ENCODE measurements at regions of chr10 and their contacts with region 1.

Region 1: DNA sequence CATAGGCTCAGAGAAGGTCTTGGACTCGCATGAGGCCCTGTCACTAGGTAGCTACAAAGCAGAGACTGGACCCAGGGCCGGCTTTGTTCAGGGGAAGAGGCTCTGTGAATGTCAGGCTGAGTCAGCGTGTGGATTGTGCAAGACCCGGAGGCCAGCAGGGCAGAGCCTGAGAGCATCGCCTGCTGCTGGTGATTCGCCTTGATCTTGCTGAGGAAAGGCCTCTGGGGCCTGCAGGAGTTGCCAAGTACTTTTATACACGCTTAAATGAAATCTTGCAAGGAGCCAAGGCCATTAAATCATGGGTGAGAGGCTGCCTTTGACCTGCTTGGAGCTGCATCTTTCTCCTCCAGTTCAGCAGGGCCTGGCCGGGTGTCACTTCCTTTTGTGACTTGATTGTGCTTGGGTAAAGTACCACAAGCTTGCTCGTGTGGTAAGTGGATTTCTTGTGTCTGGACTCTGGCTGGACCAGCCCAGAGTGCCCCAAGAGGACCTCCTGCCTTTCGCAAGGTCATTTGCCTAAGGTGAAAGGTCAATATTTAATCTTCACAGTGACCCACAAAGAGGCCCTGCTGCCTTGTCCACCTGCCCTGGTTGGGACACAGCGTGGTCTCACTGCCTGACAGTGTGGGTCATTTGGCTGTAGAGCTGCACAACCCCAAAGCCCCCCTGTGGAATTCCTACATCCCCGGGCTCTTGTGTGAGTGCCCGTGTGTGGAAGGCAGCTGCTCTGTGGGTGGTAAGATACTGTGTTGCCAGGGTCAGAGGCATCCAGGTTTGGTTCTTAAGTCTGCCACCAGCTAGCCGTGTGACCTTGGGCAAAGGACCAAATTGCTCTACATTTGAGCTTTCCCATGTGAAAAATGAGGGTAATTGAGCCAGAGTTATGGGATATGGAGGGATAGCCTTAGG is 38.6 kb upstream of the SH2D4B start:
- DNase-seq: peak; percentile 45
- H3K4me3 Mint-ChIP-seq: peak overlapping the region; percentile 44
- H3K27ac Mint-ChIP-seq: peak overlapping the region; percentile 89
- H3K4me1 Mint-ChIP-seq: peaks cover 98% of the 10 kb centered on the region
- H3K27me3 Mint-ChIP-seq: no peaks in the 10 kb centered on the region

Region 2: DNA sequence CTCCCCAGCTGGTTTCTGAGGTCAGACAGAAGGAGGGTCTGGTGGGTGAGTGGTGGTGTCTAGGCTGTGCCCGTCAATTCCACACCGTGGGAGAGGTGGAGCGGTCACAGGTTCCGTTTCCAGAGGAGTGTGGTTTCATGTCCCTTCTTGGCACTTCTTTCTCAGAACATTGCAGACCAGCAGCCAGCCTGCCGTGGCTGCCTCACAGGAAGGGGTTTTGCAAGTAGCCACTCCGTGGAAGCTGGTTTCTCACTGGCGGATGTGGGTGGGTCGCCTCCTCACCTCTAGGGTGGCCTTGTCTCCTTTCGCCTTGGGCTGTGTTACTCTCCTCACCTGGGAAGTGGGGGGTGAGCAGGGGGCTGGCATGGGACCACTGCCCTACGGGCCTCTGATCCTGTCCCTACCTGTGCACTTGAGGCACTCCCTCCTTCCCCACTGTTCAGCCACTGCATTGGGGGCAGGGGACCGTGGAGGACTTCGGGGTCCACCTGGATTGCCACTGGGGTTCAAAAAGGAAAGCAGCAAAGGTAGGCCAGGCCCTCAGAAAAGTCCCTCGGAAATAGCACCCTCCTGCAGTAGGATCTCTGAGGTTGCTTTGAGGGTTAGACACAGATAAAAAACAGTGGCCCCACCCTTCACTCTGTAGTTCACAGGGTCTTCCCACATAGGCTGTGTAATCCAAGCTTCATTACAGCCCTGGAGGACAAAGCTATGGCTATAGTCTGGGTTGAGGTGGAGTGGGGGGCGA is 11.1 kb before region 1 on chr10:
- CTCF ChIA-PET with region 1: interaction called, 58 read pairs
- POLR2A ChIA-PET with region 1: no interaction called
- DNase-seq: peak; percentile 78
- H3K4me3 Mint-ChIP-seq: peak overlapping the region; percentile 64
- H3K27ac Mint-ChIP-seq: peak overlapping the region; percentile 89
- H3K4me1 Mint-ChIP-seq: peaks cover 99% of the 10 kb centered on the region
- H3K27me3 Mint-ChIP-seq: no peaks in the 10 kb centered on the region

Region 3: DNA sequence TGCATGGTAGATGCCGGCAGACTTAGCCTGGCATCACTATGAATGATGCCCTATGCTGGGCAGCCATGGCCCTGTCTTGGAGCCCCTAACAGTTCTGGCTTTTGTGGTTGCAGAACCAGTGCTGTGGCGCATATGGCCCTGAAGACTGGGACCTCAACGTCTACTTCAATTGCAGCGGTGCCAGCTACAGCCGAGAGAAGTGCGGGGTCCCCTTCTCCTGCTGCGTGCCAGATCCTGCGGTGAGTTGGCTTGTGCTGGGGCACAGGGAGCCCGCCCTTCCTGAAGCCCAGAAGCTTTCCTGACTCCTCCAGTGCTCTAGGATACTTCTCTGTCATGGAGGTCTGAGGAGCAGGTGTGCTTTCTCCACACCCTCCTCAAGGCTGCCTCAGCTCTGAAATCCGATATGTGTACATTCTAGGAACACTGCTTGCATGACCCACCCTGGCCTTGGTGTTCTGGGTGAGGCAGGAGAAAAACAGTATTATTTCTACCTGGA is 13.0 kb after region 1 on chr10:
- CTCF ChIA-PET with region 1: interaction called, 14 read pairs
- POLR2A ChIA-PET with region 1: no interaction called
- DNase-seq: no peak
- H3K4me3 Mint-ChIP-seq: no peak overlapping the region
- H3K27ac Mint-ChIP-seq: peak overlapping the region; percentile 25
- H3K4me1 Mint-ChIP-seq: peaks cover 27% of the 10 kb centered on the region
- H3K27me3 Mint-ChIP-seq: no peaks in the 10 kb centered on the region

Region 4: DNA sequence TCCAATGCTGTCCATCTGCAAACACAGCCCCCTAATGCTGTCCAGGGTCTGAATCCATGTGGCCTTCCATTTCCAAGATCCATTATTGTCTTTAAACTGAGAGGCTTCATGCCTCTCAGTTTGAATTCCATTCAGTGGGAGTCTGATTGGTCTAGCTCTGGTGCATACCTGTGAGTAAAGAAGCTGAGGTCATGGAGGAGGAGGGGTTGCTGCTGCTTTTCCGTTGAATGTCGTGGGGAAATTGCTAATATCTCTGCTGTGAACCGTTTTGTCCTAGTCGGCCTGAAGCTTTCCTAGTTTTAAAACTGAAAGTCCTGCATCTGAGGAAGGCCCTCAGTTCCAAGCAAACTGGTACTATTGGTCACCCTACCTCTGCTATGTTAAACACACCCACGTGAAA is 56.3 kb after region 1 on chr10:
- CTCF ChIA-PET with region 1: no interaction called
- POLR2A ChIA-PET with region 1: no interaction called
- DNase-seq: no peak
- H3K4me3 Mint-ChIP-seq: no peak overlapping the region
- H3K27ac Mint-ChIP-seq: no peak overlapping the region
- H3K4me1 Mint-ChIP-seq: no peaks in the 10 kb centered on the region
- H3K27me3 Mint-ChIP-seq: peaks cover 20% of the 10 kb centered on the region

Region 5: DNA sequence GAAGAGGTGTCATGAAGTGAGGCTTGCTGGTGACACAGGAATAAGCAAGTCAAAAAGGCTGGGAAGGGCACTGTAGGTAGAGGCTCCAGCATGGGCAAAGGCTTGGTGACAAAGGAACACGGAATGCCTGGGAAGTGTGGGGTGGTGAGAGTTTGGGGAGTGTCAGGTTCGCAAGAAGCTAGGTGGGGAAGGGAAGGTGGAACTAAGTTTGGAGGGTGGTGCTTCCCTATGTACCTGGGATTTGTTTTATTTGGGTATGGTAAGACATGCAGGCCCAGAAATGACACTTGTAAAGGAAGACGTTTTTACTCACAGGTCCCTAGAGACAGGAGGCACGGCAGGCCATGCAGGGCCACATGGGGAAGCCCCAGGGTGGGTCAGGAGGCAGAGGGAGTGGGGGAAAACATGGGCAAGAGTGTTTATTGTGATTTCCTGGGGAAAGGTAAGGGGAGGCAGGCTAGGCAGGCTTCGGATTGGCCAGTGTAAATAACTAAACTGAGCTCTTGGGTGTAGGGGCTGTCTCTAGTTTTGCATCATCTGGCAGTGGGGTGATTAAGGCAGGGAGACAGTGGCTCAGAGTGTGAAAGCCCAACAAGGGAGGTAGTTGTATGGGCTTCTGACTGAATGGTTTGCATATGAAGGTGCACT is 90.8 kb after region 1 on chr10:
- CTCF ChIA-PET with region 1: no interaction called
- POLR2A ChIA-PET with region 1: no interaction called
- DNase-seq: no peak
- H3K4me3 Mint-ChIP-seq: no peak overlapping the region
- H3K27ac Mint-ChIP-seq: no peak overlapping the region
- H3K4me1 Mint-ChIP-seq: no peaks in the 10 kb centered on the region
- H3K27me3 Mint-ChIP-seq: peaks cover 3% of the 10 kb centered on the region

Measured in activated CD4-positive, alpha-beta T cell treated with anti-CD3 and anti-CD28 coated beads, Interleukin-2, amount 10 ng/mL, durations not matched to agents 7 days and 5 days (primary cell).